ENCODE measurements at regions of chr9 and their contacts with region 1.

Region 1: DNA sequence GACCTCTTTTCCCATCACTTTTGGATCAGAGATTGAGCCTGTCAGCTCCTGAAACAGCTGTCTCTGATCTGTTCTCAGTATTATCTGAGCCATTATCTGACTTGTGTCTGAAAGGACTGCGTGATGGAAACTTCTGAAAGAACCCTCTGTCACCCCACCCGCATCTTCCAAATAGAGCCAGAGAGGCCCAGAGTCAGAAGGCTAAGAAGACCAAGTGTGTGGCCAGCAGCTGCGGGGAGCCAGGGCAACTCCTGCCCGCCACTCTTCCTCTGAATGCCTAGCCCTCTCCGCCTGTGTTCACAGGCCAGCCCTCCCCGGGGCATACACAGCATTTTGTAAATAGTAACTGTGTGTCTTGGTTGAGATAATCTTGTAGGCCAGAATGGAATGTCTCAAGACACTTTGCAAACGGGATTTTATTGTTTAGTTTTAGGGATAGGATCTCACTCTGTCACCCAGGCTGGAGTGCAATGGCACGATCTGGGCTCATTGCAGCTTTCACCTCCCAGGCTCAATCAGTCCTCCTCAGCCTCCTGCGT is 92.7 kb downstream of the AOPEP start:
- DNase-seq: no peak
- H3K4me3 ChIP-seq: no peak overlapping the region
- CTCF ChIP-seq: no peak

Region 2: GRCh38 chr9:94867281-94867841 is 48.1 kb after region 1 on chr9:
- in situ Hi-C with region 1: loop called (anchors 5 kb)
- DNase-seq: peak; percentile 49
- H3K4me3 ChIP-seq: no peak overlapping the region
- CTCF ChIP-seq: no peak

Region 3: DNA sequence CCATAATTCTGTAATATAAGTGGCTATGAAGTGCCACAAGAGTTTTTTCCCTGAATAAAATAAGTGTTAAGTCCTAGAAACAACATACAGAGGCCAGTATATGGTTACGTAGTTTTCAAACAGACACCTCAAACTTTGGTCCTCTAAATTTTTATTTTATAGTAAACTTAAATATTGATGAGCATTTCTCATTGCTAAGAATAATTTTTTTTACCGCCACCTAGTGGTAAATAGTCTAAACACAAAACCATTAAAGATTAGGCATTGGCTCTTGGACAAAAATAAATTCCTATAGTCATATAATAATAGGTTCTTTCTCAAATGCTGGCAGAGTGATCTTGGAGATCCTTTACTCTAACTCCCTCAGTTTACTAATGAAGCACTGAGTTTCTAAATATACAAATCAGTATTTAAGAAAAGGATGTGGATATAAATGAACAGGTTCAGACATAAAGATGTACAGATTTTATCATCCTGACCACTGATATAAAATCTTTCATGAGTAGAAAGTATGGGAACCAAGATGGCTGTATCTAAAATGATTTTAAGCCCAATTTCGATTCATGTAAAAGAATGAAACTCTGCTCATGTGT is 362.1 kb after region 1 on chr9:
- in situ Hi-C with region 1: no loop called
- DNase-seq: no peak
- H3K4me3 ChIP-seq: no peak overlapping the region
- CTCF ChIP-seq: peak; percentile 23